ENCODE measurements at regions of chr22 and their contacts with region 1.

Region 1: GRCh38 chr22:46057762-46058420 is 80.9 kb upstream of the WNT7B start:
- DNase-seq: peak; percentile 89
- H3K4me3 ChIP-seq: peak overlapping the region; percentile 66
- H3K27ac ChIP-seq: peak overlapping the region; percentile 92
- H3K4me1 ChIP-seq: peaks cover 60% of the 10 kb centered on the region
- CTCF ChIP-seq: no peak

Region 2: GRCh38 chr22:45775569-45776312 is 282.1 kb before region 1 on chr22:
- CTCF ChIA-PET with region 1: no interaction called
- POLR2A ChIA-PET with region 1: no interaction called
- intact Hi-C with region 1: loop called (anchors 5 kb)
- DNase-seq: peak; percentile 86
- H3K4me3 ChIP-seq: peak overlapping the region; percentile 40
- H3K27ac ChIP-seq: peak overlapping the region; percentile 92
- H3K4me1 ChIP-seq: peaks cover 72% of the 10 kb centered on the region
- CTCF ChIP-seq: no peak

Region 3: GRCh38 chr22:46071451-46072109 is 13.7 kb after region 1 on chr22:
- CTCF ChIA-PET with region 1: no interaction called
- POLR2A ChIA-PET with region 1: interaction called, 4 read pairs
- intact Hi-C with region 1: loop called (anchors 2 kb)
- DNase-seq: peak; percentile 44
- H3K4me3 ChIP-seq: peak overlapping the region; percentile 66
- H3K27ac ChIP-seq: no peak overlapping the region
- H3K4me1 ChIP-seq: peaks cover 38% of the 10 kb centered on the region
- CTCF ChIP-seq: no peak

Region 4: DNA sequence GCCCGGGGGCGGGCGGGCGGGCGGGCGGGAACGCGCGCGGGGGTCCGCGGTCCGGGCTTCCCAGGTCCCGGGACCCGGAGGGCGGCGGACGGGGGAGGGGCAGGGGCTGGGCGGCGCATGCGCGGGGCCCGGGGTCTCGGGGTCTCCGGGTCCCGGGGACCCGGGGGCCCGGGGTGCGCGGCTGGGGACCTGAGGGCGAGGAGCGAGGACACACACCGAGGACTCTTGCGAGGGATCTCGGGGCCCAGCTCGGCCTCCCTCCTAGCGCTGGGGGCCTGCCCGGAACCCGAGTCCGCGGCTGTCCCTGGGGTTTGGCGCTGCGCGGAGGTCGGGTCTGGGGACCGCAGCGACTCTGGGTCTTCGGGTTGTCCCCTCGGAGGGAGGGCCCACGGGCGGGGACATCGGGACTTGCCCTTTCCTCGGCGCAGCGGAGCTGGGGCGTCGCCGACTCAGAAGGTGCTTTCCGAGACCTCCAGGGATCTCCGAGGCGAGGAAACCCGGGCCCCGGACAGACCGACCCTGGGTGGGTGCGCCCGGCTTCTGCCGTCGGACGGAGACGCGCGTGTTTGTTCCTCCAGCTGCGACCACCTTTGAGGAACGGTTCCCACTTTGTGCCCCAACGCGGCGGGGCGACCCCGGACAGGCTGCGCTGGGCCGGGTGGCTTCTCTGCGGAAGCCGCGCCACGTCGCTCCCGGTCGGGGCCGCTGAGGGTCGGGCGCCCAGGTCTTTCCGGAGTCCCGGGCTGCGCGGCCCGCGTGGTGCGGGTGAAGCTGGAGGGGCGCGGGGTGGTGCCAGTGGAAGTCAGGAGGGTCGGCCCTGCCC is 93.0 kb after region 1 on chr22:
- CTCF ChIA-PET with region 1: no interaction called
- POLR2A ChIA-PET with region 1: no interaction called
- intact Hi-C with region 1: no loop called
- DNase-seq: peak; percentile 13
- H3K4me3 ChIP-seq: peak overlapping the region; percentile 72
- H3K27ac ChIP-seq: no peak overlapping the region
- H3K4me1 ChIP-seq: peaks cover 16% of the 10 kb centered on the region
- CTCF ChIP-seq: no peak

Measured in OCI-LY7 (cell line).